Mammary epithelial cell (primary cell): ENCODE measurements at regions of chr1 and their contacts with region 1.

Region 1: DNA sequence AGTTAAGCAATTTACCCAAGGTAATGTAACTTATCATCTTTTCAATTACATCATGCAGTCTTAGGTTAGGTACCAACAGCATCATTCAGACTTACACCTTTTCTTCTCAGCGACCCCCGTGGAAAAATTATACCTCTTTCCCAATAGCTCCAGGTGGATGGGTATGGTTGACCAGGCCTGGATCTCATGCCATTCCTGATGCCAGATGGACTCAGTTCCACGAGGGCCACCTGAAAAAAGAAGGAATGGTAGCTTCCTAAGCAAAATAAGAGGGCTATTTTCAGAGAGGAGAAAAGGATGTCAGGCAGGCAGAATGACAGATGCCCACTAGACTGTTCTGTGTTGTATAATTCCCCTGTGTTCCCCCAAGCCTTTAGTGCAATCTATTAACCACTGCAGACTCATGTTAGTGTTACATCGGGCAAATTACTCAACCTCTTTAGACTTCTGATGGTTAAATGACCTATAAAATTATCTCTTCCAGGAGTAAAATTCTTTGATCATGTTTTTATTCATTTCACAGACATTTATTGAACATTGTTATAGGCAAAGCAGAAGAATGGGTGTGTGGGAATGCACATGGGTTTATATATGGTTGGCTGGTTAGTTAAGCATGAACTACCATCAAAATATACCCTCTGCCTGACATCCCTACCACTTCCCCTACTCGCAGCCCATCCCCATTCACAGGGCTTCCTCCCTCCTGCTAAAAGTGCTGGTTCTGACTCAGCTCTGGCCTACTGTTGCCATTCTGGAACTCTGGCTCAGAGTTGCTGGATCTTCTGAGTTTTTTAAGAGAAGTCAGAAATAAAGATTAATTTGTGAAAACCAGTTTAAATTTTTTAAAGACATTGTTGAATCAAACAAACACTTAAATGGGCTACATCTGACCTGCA is 10.6 kb upstream of the MYSM1 start:
- DNase-seq: no peak
- H3K4me3 ChIP-seq: no peak overlapping the region
- H3K27ac ChIP-seq: no peak overlapping the region
- H3K4me1 ChIP-seq: no peaks in the 10 kb centered on the region
- H3K27me3 ChIP-seq: no peaks in the 10 kb centered on the region
- CTCF ChIP-seq: no peak

Region 2: DNA sequence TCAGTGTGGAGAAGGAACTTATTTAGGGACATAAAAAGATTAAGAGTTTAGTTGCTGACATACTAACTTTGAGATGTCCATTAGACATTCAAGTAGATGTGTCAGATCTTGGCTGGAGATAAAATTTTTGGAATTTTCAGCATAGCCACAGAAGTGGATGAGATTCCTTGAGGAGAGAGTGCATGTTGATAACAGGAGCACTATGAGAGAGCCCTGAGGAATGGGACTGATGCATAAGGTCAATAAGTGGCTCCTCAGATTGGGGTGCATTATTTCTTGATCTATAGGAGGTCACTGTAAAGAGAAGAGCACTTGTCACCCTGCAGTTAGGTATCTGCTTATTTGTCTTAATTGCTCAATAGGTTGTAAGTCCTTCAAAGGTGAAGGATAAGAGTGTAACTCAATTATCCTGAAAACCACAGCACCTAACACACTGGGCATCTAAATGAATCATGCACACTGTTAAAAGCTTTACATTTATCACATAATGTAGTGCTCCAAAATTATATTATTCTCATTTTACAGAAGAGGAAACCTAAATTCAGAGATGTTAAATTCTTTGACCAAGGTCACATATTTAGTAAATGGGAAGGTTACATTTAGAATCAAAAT is 81.3 kb before region 1 on chr1:
- CTCF ChIA-PET with region 1: no interaction called
- dilution Hi-C with region 1: no loop called
- in situ Hi-C with region 1: no loop called
- intact Hi-C with region 1: no loop called
- DNase-seq: no peak
- H3K4me3 ChIP-seq: no peak overlapping the region
- H3K27ac ChIP-seq: no peak overlapping the region
- H3K4me1 ChIP-seq: no peaks in the 10 kb centered on the region
- H3K27me3 ChIP-seq: no peaks in the 10 kb centered on the region
- CTCF ChIP-seq: no peak

Region 3: GRCh38 chr1:58721247-58721820 is 10.9 kb after region 1 on chr1:
- CTCF ChIA-PET with region 1: interaction called, 10 read pairs
- dilution Hi-C with region 1: no loop called
- in situ Hi-C with region 1: no loop called
- intact Hi-C with region 1: no loop called
- DNase-seq: no peak
- H3K4me3 ChIP-seq: no peak overlapping the region
- H3K27ac ChIP-seq: no peak overlapping the region
- H3K4me1 ChIP-seq: peaks cover 32% of the 10 kb centered on the region
- H3K27me3 ChIP-seq: no peaks in the 10 kb centered on the region
- CTCF ChIP-seq: no peak

Region 4: GRCh38 chr1:58764294-58764978 is 54.0 kb after region 1 on chr1:
- CTCF ChIA-PET with region 1: no interaction called
- dilution Hi-C with region 1: no loop called
- in situ Hi-C with region 1: no loop called
- intact Hi-C with region 1: no loop called
- DNase-seq: peak; percentile 73
- H3K4me3 ChIP-seq: no peak overlapping the region
- H3K27ac ChIP-seq: peak overlapping the region; percentile 43
- H3K4me1 ChIP-seq: peaks cover 37% of the 10 kb centered on the region
- H3K27me3 ChIP-seq: no peaks in the 10 kb centered on the region
- CTCF ChIP-seq: no peak